Naive thymus-derived CD4-positive, alpha-beta T cell (primary cell): ENCODE measurements at regions of chr16 and their contacts with region 1.

Region 1: GRCh38 chr16:30557957-30558788 is at the start of gene ZNF764:
- DNase-seq: peak; percentile 79 to 95 (median 91)
- ATAC-seq: peak; percentile 95
- H3K4me3 ChIP-seq: peak within 1 kb of the TSS; percentile 92
- H3K4me3 Mint-ChIP-seq: peak within 1 kb of the TSS; percentile 83 to 92 (median 90)
- H3K27ac ChIP-seq: peak within 1 kb of the TSS; percentile 99
- H3K27ac Mint-ChIP-seq: peak within 1 kb of the TSS; percentile 87 to 94 (median 92)
- H3K4me1 ChIP-seq: peaks cover 12 to 15% of the 10 kb centered on the region in 2 donors
- H3K4me1 Mint-ChIP-seq: peaks cover 33 to 58% (median 43%) of the 10 kb centered on the region in 7 donors
- H3K27me3 ChIP-seq: no peaks in the 10 kb centered on the region
- H3K27me3 Mint-ChIP-seq: no peaks in the 10 kb centered on the region
- total RNA-seq, gene ZNF764: 11.9 to 20.9 (median 19.3) TPM

Region 2: GRCh38 chr16:30378236-30379204 is 179.7 kb before region 1 on chr16:
- CTCF ChIA-PET with region 1: no interaction called
- POLR2A ChIA-PET with region 1: no interaction called
- intact Hi-C with region 1: loop called in 1 of 2 experiments (anchors 5 kb)
- DNase-seq: peak; percentile 97 to 99 (median 99)
- ATAC-seq: peak; percentile 91
- H3K4me3 ChIP-seq: peak overlapping the region; percentile 88
- H3K4me3 Mint-ChIP-seq: peak overlapping the region; percentile 90 to 100 (median 97)
- H3K27ac ChIP-seq: peak overlapping the region; percentile 100
- H3K27ac Mint-ChIP-seq: peak overlapping the region; percentile 98 to 100 (median 100)
- H3K4me1 ChIP-seq: peaks cover 54 to 56% of the 10 kb centered on the region in 2 donors
- H3K4me1 Mint-ChIP-seq: peaks cover 32 to 61% (median 49%) of the 10 kb centered on the region in 7 donors
- H3K27me3 ChIP-seq: no peaks in the 10 kb centered on the region
- H3K27me3 Mint-ChIP-seq: no peaks in the 10 kb centered on the region

Region 3: DNA sequence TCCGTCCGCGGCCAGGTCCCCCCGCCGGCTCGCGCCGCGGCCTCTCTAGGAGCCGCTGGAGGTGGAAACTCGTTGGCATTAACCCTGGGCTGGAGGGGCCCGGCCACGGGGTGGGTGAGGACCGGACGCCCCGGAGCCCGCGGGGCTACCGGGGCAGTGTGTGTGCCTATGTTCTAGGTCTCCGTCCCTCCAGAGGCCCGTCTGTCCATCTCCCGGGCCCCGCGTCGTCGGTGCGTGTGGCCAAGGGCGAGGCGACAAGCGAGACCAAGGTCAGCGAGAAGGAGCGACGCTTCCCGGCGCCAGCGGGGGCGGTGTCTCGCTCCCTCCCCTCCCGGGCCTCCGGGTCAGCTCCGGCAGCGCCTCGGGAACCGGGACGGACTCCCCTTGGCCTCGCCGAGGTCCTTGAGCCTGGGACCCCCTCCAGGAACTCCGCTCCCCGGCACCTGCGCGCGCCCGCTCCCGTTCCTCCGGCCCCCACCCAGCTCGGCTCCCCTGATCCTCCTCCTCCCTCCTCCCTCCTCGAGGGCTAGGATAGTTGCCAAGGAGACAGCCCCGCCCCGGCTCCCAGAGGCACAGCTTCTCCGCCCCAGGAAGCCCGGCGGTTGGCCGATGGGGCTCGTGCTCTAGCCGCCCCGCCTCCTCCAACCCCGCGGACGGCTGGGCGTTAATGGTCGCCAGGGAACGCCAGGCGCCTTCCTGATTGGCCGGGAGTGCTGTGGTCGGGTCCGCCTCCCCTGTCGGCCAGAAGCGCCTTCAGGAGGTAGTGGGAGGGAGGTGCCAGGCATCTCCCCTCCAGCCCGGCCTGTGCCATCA is 31.1 kb before region 1 on chr16:
- CTCF ChIA-PET with region 1: interaction called, 4 read pairs
- POLR2A ChIA-PET with region 1: interaction called, 29 read pairs
- intact Hi-C with region 1: loop called (anchors 1 to 2 kb)
- DNase-seq: peak; percentile 59 to 95 (median 64)
- ATAC-seq: peak; percentile 87
- H3K4me3 ChIP-seq: peak overlapping the region; percentile 75
- H3K4me3 Mint-ChIP-seq: peak overlapping the region; percentile 78 to 92 (median 88)
- H3K27ac ChIP-seq: peak overlapping the region; percentile 76
- H3K27ac Mint-ChIP-seq: peak overlapping the region; percentile 82 to 94 (median 88)
- H3K4me1 ChIP-seq: peaks cover 0 to 10% of the 10 kb centered on the region in 2 donors
- H3K4me1 Mint-ChIP-seq: peaks cover 16 to 39% (median 32%) of the 10 kb centered on the region in 7 donors
- H3K27me3 ChIP-seq: no peaks in the 10 kb centered on the region
- H3K27me3 Mint-ChIP-seq: no peaks in the 10 kb centered on the region

Region 4: GRCh38 chr16:30585400-30586189 is 27.4 kb after region 1 on chr16 and contains the start of gene ZNF785:
- CTCF ChIA-PET with region 1: interaction called, 4 read pairs
- POLR2A ChIA-PET with region 1: interaction called, 20 read pairs
- intact Hi-C with region 1: loop called (anchors 1 kb)
- DNase-seq: peak; percentile 72 to 95 (median 93)
- ATAC-seq: peak; percentile 100
- H3K4me3 ChIP-seq: peak within 1 kb of the TSS; percentile 77
- H3K4me3 Mint-ChIP-seq: peak within 1 kb of the TSS; percentile 85 to 98 (median 94)
- H3K27ac ChIP-seq: peak within 1 kb of the TSS; percentile 81
- H3K27ac Mint-ChIP-seq: peak within 1 kb of the TSS; percentile 89 to 95 (median 92)
- H3K4me1 ChIP-seq: peaks cover 8 to 12% of the 10 kb centered on the region in 2 donors
- H3K4me1 Mint-ChIP-seq: peaks cover 6 to 44% (median 32%) of the 10 kb centered on the region in 7 donors
- H3K27me3 ChIP-seq: no peaks in the 10 kb centered on the region
- H3K27me3 Mint-ChIP-seq: peaks cover 0 to 2% (median 0%) of the 10 kb centered on the region in 5 donors
- total RNA-seq, gene ZNF785: 10.2 to 37.1 (median 21.4) TPM